ENCODE measurements at regions of chr4 and their contacts with region 1.

Region 1: DNA sequence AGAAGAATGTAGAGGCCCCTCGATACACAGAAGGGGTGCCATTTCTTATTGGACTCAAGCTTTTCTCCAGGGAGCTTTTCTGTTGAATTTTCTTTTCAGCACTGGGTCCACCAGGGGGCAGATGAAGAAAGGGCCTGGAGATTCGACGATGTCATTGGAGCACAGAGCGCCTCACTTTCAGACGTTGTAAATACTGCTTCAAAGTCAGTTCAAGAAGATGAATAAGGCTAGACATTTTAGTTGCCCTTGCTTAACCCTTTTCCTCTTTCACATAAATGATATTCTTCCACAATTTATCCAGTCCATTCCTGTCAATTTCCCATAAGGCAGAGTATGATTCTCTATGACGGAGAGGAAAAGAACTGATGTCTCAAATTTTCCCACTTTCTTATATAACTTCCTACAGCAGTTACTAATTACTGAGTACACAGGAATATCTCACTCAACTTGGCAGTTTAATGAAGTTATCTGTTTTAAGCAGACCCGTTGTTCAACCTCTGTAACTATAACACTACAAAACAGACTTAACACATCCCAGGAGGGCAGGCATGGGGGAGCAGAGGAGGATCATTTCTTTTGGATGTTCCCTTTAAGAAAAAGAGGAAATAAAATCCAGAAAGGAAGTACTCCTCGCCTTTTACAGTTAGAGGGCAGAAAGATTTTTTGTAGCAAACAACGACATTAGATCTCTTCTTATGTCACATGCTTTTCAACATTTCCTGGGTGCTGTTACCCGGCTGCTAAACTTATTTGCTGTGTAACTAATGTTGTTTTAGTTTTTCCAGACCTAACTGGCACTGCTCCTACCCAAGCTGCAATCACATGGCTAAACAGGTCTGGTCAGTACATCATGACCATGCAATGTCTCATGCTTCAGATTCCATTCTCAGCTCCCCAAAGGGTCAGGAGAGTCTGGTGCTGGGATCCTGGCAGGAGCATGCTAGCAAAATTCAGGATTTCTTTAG is 12.2 kb upstream of the CENPU start:
- DNase-seq: peak; percentile 61 to 64 (median 63)
- H3K4me3 ChIP-seq: no peak overlapping the region
- H3K4me3 Mint-ChIP-seq: no peak overlapping the region
- H3K27ac ChIP-seq: no peak overlapping the region
- H3K27ac Mint-ChIP-seq: peak overlapping the region in 2 of 7 donors; percentile 17 to 71
- H3K4me1 ChIP-seq: peaks cover 4% of the 10 kb centered on the region
- H3K4me1 Mint-ChIP-seq: peaks cover 0 to 10% (median 2%) of the 10 kb centered on the region in 4 donors
- H3K27me3 ChIP-seq: no peaks in the 10 kb centered on the region
- H3K27me3 Mint-ChIP-seq: peaks cover 0 to 3% of the 10 kb centered on the region in 2 donors

Region 2: GRCh38 chr4:184825896-184826690 is 80.0 kb after region 1 on chr4 and contains the start of gene ACSL1:
- CTCF ChIA-PET with region 1: interaction called, 3 read pairs
- POLR2A ChIA-PET with region 1: interaction called, 3 read pairs
- intact Hi-C with region 1: loop called (anchors 5 kb)
- DNase-seq: peak; percentile 73 to 80 (median 79)
- H3K4me3 ChIP-seq: peak within 1 kb of the TSS; percentile 24 to 55
- H3K4me3 Mint-ChIP-seq: peak within 1 kb of the TSS; percentile 85 to 97 (median 91)
- H3K27ac ChIP-seq: peak within 1 kb of the TSS; percentile 56
- H3K27ac Mint-ChIP-seq: peak within 1 kb of the TSS; percentile 85 to 97 (median 93)
- H3K4me1 ChIP-seq: peaks cover 24% of the 10 kb centered on the region
- H3K4me1 Mint-ChIP-seq: peaks cover 13 to 45% (median 19%) of the 10 kb centered on the region in 4 donors
- H3K27me3 ChIP-seq: no peaks in the 10 kb centered on the region
- H3K27me3 Mint-ChIP-seq: no peaks in the 10 kb centered on the region
- total RNA-seq, gene ACSL1: 11.5 to 12.9 TPM

Region 3: DNA sequence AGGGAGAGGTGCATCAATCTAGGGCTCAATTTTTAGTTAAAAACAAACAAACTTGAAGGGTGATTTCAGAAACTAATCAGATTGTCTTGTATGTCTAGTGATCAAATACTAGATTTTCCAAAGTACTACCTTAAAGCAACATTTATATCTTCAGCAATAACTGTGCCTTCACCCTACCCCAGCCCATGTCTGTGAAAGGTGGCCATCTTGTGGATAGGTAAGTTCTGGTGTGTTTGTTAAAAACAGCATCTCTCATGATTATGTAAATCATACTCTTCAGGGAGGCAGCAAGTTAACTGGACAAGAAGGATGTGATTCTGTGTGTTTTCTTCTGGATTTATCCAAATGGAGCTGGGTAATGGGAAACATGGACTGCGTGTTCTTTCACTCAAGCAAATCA is 161.1 kb after region 1 on chr4:
- CTCF ChIA-PET with region 1: interaction called, 4 read pairs
- POLR2A ChIA-PET with region 1: no interaction called
- intact Hi-C with region 1: loop called (anchors 1 kb)
- DNase-seq: peak in 1 of 5 donors; percentile 4
- H3K4me3 ChIP-seq: no peak overlapping the region
- H3K4me3 Mint-ChIP-seq: no peak overlapping the region
- H3K27ac ChIP-seq: no peak overlapping the region
- H3K27ac Mint-ChIP-seq: peak overlapping the region in 1 of 7 donors; percentile 5
- H3K4me1 ChIP-seq: no peaks in the 10 kb centered on the region
- H3K4me1 Mint-ChIP-seq: peaks cover 2 to 8% (median 5%) of the 10 kb centered on the region in 4 donors
- H3K27me3 ChIP-seq: no peaks in the 10 kb centered on the region
- H3K27me3 Mint-ChIP-seq: peaks cover 2 to 3% of the 10 kb centered on the region in 2 donors

Region 4: GRCh38 chr4:184961660-184962059 is 215.5 kb after region 1 on chr4:
- CTCF ChIA-PET with region 1: interaction called, 3 read pairs
- POLR2A ChIA-PET with region 1: no interaction called
- intact Hi-C with region 1: loop called (anchors 5 kb)
- DNase-seq: no peak
- H3K4me3 ChIP-seq: no peak overlapping the region
- H3K4me3 Mint-ChIP-seq: no peak overlapping the region
- H3K27ac ChIP-seq: no peak overlapping the region
- H3K27ac Mint-ChIP-seq: no peak overlapping the region
- H3K4me1 ChIP-seq: no peaks in the 10 kb centered on the region
- H3K4me1 Mint-ChIP-seq: peaks cover 5 to 7% (median 6%) of the 10 kb centered on the region in 4 donors
- H3K27me3 ChIP-seq: no peaks in the 10 kb centered on the region
- H3K27me3 Mint-ChIP-seq: peaks cover 4% of the 10 kb centered on the region in 2 donors

Region 5: DNA sequence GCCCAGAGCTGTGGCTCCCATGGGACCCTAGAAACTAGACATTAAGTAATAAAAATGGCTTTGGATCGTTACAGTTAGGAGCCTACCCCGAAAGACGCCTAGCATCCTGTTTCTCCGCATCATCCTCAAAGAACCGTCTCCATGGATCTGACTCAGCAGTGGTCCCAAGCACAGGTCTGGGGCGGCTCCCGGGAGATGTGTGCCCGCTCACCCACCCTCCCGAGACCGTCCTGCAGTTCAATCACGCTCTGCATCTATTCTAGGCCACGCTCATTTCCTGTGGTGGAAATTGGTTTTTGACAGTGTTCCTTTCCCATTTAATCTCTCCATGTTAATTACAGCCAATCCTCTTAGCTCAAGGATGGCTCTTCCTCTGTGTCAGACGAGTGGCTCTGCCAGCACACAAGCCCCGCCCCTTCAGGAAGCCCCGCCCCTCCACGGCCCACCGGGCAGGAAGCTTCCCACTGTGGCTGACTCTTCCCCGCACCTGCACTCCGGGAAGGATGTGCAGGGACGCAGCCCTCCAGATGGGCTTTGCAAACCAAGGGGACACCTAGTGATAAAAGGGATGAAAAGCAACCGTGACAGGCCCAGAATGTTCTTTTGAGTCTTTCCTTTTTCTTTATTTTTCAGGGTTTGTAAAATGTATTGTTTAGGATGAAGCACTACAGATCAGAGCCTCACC is 237.7 kb after region 1 on chr4:
- CTCF ChIA-PET with region 1: interaction called, 10 read pairs
- POLR2A ChIA-PET with region 1: no interaction called
- intact Hi-C with region 1: loop called (anchors 1 kb)
- DNase-seq: peak in 4 of 5 donors; percentile 28 to 36 (median 30)
- H3K4me3 ChIP-seq: peak overlapping the region in 1 of 2 donors; percentile 29
- H3K4me3 Mint-ChIP-seq: no peak overlapping the region
- H3K27ac ChIP-seq: no peak overlapping the region
- H3K27ac Mint-ChIP-seq: no peak overlapping the region
- H3K4me1 ChIP-seq: peaks cover 20% of the 10 kb centered on the region
- H3K4me1 Mint-ChIP-seq: peaks cover 0 to 9% (median 0%) of the 10 kb centered on the region in 4 donors
- H3K27me3 ChIP-seq: no peaks in the 10 kb centered on the region
- H3K27me3 Mint-ChIP-seq: peaks cover 0 to 8% of the 10 kb centered on the region in 2 donors

Region 6: DNA sequence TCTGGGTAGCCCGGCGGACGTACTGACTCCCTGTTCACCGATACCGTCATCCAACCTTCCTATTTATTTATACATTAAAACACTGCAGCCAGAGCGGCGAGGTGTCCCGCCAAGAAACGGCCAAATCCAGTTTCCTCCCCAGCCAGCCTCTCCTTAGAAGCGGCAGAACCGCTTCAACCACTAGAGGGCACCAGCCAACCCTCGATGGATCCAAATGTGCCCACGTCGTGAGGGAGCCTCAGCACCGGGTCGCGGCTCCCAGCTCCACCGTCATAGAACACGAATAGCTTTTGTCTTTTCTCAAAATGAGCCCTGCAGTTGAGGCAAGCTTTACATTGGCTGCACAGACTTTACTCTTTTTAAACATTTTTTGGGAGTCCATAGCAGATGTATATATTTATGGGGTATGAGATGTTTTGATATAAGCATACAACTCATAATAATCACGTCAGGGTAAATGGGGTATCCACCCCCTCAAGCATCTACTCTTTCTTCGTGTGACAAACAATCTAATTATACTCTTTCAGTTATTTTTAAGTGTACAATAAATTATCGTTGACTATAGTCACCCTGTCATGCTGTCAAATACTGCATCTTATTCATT is 259.2 kb after region 1 on chr4:
- CTCF ChIA-PET with region 1: interaction called, 7 read pairs
- POLR2A ChIA-PET with region 1: no interaction called
- intact Hi-C with region 1: loop called (anchors 2 kb)
- DNase-seq: peak; percentile 62 to 67 (median 64)
- H3K4me3 ChIP-seq: no peak overlapping the region
- H3K4me3 Mint-ChIP-seq: peak overlapping the region; percentile 30 to 72 (median 60)
- H3K27ac ChIP-seq: no peak overlapping the region
- H3K27ac Mint-ChIP-seq: peak overlapping the region in 1 of 7 donors; percentile 6
- H3K4me1 ChIP-seq: peaks cover 7% of the 10 kb centered on the region
- H3K4me1 Mint-ChIP-seq: peaks cover 4 to 12% (median 5%) of the 10 kb centered on the region in 4 donors
- H3K27me3 ChIP-seq: no peaks in the 10 kb centered on the region
- H3K27me3 Mint-ChIP-seq: peaks cover 25 to 42% of the 10 kb centered on the region in 2 donors

Region 7: DNA sequence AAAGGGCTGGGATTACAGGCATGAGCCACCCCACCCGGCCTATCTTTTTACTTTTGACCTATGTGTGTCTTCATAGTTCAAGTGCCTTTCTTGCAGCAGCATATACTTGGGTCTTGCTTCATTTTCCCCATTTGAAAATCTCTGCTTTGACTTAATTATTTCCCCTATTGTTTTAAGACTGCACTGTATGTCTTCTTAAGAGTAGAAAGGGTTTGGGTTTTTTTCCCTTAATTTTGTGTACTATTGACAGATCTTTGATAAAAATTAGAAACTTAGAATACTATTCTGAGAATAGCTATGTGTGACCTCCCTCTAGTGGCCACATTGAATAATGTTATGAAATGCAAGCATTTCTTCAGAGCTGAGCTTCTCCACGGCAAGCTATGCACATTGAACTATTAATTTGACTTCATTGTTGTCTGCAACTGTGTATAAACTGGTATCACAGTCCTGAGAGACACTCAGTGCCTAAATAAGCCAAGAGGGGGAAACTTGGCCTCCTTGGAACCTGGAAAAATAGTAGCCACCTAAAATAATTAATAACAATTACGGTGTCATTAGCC is 388.3 kb after region 1 on chr4:
- CTCF ChIA-PET with region 1: interaction called, 5 read pairs
- POLR2A ChIA-PET with region 1: no interaction called
- intact Hi-C with region 1: loop called (anchors 1 kb)
- DNase-seq: peak in 4 of 5 donors; percentile 36 to 45 (median 44)
- H3K4me3 ChIP-seq: no peak overlapping the region
- H3K4me3 Mint-ChIP-seq: no peak overlapping the region
- H3K27ac ChIP-seq: no peak overlapping the region
- H3K27ac Mint-ChIP-seq: peak overlapping the region in 1 of 7 donors; percentile 84
- H3K4me1 ChIP-seq: no peaks in the 10 kb centered on the region
- H3K4me1 Mint-ChIP-seq: peaks cover 0 to 4% (median 0%) of the 10 kb centered on the region in 4 donors
- H3K27me3 ChIP-seq: no peaks in the 10 kb centered on the region
- H3K27me3 Mint-ChIP-seq: peaks cover 13 to 19% of the 10 kb centered on the region in 2 donors